BJ (cell line): ENCODE measurements at regions of chrX and their contacts with region 1.

Region 1: DNA sequence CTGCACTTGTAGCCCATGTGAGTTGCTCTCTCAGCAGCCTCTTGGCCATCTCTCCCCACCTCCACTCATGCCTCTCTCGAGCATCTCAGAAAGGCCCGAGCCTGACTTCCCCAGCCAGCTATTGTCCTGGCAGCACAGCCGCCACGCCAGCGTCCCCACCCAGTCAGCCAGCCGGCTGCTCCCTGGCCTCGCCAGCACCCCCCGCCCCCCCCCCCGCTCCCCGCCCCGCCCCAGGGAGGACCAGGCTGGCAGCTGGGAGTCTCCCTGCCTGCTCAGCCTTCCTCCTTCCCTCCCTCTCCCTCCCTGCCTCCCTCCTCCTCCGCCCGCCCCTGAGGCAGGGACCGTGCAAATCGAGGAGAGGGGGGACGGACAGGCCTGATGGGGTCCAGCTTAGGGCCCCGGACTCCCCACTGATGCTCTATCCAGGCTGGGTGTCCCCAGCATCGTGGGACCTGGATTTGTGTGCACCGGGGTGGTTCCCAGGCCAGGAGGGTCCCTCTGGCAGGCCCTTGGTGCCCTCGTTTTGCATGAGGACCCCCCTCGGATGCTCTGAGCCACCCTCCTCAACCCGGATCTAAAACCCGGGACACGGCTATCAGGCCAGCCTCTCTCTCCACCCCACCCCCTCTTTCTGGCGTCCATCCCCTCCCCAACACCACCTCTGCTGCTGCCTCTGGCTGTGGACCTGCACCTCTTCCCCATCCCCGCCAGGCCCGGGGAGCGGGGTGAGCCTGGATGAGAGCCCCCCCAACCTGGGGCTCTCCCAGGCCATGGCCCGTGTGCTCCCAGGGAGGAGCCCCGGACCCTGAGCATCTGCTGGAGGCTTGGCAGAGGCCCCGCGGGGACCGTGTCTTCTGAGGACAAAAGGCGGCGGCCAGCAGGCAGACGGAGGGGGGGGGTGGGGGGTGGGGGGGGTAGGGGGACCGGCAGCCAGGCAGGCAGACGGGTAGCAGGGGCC is at the start of gene GPR173:
- DNase-seq: no peak
- H3K4me3 ChIP-seq: peak within 1 kb of the TSS; percentile 65
- H3K27me3 ChIP-seq: no peaks in the 10 kb centered on the region
- CTCF ChIP-seq: no peak
- polyA plus RNA-seq, gene GPR173: 1.7 and 2.7 TPM in 2 replicates

Region 2: DNA sequence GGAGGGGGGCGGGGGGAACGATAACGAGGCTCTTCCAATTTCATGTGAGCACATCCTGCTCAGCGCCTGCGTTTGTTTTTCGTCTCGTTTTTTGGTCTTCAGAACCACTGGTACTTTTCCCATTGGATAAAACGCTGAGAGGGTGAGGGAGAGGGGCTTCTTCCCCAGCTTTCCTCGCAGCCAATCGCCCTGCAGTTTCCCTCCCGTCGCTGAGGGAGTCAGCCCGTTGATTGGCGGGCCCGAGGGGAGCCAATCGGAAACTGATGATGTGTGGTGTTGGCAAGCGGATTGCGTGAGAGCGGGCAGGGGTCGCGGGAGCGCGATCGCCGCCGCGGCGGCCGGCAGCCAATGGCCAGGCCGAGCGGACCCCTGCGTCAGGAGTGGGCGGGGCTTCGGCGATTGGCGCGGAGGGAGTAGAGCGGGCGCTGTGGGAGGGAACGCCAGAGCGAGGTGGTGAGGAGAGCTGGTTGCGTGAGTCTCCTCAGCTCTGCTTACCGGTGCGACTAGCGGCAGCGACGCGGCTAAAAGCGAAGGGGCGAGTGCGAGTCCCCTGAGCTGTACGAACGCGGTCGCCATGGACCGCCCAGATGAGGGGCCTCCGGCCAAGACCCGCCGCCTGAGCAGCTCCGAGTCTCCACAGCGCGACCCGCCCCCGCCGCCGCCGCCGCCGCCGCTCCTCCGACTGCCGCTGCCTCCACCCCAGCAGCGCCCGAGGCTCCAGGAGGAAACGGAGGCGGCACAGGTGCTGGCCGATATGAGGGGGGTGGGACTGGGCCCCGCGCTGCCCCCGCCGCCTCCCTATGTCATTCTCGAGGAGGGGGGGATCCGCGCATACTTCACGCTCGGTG is 33.7 kb after region 1 on chrX and contains the start of gene TSPYL2:
- CTCF ChIA-PET with region 1: no interaction called
- POLR2A ChIA-PET with region 1: interaction called, 10 read pairs
- DNase-seq: peak; percentile 90
- H3K4me3 ChIP-seq: peak within 1 kb of the TSS; percentile 74
- H3K27me3 ChIP-seq: no peaks in the 10 kb centered on the region
- CTCF ChIP-seq: no peak
- polyA plus RNA-seq, gene TSPYL2: 22.9 and 29.3 TPM in 2 replicates